H1 (cell line): ENCODE measurements at regions of chr16 and their contacts with region 1.

Region 1: DNA sequence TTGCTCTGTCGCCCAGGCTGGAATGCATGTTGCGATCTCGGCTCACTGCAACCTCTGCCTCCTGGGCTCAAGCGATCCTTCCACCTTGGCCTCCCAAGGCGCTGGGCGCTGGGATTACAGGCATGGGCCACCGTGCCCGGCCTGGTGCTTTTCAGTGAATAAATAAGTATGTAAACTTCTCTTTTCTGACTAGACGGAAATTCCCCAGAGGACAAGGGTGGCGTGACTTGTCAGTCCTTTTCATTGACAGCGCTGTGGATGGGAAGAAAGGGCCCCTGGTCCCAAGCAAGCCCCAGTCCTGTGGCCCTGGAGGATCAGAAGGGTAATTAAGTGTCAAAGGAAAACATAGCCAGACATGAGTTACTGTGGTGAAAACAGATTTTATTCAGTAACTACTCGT is 9.6 kb upstream of the SPN start:
- DNase-seq: no peak
- H3K4me3 ChIP-seq: no peak overlapping the region
- H3K27ac ChIP-seq: no peak overlapping the region
- H3K4me1 ChIP-seq: no peaks in the 10 kb centered on the region; a peak in 1 of 7 replicates
- H3K27me3 ChIP-seq: no peaks in the 10 kb centered on the region
- CTCF ChIP-seq: no peak
- EP300 ChIP-seq: no peak
- POLR2A ChIP-seq: no peak
- RAD21 ChIP-seq: no peak

Region 2: DNA sequence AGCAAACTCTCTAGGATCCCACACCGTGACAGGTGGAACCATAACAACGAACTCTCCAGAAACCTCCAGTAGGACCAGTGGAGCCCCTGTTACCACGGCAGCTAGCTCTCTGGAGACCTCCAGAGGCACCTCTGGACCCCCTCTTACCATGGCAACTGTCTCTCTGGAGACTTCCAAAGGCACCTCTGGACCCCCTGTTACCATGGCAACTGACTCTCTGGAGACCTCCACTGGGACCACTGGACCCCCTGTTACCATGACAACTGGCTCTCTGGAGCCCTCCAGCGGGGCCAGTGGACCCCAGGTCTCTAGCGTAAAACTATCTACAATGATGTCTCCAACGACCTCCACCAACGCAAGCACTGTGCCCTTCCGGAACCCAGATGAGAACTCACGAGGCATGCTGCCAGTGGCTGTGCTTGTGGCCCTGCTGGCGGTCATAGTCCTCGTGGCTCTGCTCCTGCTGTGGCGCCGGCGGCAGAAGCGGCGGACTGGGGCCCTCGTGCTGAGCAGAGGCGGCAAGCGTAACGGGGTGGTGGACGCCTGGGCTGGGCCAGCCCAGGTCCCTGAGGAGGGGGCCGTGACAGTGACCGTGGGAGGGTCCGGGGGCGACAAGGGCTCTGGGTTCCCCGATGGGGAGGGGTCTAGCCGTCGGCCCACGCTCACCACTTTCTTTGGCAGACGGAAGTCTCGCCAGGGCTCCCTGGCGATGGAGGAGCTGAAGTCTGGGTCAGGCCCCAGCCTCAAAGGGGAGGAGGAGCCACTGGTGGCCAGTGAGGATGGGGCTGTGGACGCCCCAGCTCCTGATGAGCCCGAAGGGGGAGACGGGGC is 10.8 kb after region 1 on chr16:
- CTCF ChIA-PET with region 1: interaction called, 4 read pairs
- POLR2A ChIA-PET with region 1: interaction called, 12 read pairs
- DNase-seq: no peak
- H3K4me3 ChIP-seq: no peak overlapping the region
- H3K27ac ChIP-seq: no peak overlapping the region
- H3K4me1 ChIP-seq: peaks cover 0 to 24% (median 18%) of the 10 kb centered on the region in 4 experiments; a peak in 6 of 7 replicates
- H3K27me3 ChIP-seq: no peaks in the 10 kb centered on the region; a peak in 1 of 7 replicates
- CTCF ChIP-seq: no peak
- EP300 ChIP-seq: no peak
- POLR2A ChIP-seq: no peak
- RAD21 ChIP-seq: no peak